GM18951 (cell line): ENCODE measurements at regions of chr15 and their contacts with region 1.

Region 1: DNA sequence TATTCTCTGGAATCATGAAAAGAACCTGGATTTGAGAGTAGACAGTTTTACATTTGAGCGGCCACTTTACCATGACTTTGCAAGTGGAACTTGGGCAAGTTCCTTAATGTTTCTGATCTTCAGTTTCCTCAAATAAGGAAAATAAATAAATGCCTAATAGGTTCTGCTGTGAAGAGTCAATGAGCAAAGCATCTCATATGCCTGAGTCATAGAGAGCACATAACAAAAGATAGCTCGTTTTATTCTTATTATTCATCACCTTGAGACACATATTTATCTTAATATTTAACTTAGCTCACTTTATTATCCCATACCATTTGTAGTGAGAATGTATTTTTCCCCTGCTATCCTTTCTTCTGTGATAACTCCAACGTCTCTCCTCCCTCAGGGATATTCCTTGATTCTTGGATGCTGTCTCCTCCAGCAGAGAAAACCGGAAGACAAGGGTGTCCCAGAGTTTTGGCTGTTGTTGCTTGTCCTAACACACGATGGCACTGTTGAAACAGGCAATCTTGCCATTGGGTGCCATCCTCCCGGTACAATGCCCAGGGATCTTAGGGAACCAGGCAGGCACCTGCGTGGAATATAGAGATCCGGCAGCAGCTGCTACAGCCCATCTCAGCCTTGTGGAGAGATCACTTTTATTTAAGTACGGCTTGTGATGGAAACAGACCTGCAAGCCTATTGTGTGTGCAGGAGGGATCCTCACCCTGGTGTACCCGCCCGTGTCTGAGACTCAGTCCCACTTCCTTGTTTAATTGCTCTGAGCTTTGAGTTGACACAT is 33.3 kb upstream of the VPS33B start:
- POLR2A ChIP-seq: no peak

Region 2: GRCh38 chr15:90046911-90047392 is 1008.8 kb before region 1 on chr15:
- in situ Hi-C with region 1: no loop called
- POLR2A ChIP-seq: no peak

Region 3: DNA sequence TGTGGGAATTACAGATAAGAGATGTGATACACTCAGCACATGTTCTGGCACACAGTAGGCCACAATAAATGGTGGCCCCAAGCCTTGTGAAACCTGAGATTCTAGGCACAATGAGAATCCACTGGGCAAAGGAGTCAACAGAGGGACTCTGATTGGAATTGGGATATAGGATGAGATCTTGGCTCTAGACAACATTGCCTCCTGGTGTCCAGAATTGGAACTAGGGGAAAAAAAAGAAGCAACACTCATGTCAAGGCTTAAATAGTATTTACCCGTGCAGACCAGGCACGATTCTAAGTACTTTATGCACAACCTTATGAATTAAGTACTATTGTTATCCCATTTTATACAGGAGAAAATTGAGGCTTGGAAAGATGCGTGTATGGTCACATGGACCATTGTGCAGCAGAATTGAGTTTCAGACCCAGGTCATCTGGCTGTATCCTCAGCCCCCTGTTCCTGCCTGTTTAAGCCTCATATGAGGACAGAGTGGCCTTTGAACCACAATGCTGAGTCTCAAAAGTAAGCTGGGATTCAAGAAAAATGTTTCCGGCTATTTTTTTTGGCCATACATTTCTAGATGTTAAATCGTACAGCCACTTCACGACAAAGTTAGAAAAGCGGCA is 169.1 kb after region 1 on chr15:
- in situ Hi-C with region 1: loop called (anchors 5 kb)
- POLR2A ChIP-seq: no peak

Region 4: GRCh38 chr15:91652610-91653207 is 597.0 kb after region 1 on chr15:
- in situ Hi-C with region 1: no loop called
- POLR2A ChIP-seq: no peak